ENCODE measurements at regions of chr1 and their contacts with region 1.

Region 1: DNA sequence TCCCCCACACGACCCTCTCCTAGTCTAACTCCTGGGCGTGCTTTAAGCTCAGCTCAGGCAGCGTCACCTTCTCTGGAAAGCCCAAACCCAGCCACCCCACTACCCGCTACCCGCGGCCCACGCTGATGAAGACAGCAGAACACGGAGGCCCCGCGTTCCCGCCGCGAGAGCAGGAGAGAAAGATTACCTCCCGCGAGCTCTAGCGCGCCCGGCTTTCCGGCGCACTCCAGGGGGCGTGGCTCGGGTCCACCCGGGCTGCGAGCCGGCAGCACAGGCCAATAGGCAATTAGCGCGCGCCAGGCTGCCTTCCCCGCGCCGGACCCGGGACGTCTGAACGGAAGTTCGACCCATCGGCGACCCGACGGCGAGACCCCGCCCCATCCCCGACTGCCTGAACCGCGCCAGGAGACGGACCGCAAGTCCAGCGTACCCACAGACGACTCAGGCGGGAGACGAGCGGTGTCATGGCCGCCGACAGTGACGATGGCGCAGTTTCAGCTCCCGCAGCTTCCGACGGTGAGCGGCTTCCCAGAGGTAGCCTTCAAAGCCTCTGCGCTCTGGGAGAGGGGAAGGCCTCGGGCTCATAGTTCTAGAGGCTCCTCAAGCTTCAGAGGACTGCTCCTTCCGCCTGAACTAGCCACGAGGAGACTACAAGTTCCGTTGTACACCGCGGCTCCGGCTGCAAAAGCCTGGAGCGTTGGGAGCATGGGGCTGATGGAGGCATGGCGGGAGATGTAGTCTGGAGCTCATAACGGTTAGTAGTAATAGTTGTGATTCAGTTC is at the starts of genes MUTYH and TOE1:
- DNase-seq: peak; percentile 83 to 94 (median 88)
- ATAC-seq: peak; percentile 79
- H3K4me3 ChIP-seq: peak within 1 kb of the TSS; percentile 98
- H3K4me3 Mint-ChIP-seq: peak within 1 kb of the TSS; percentile 100
- H3K27ac ChIP-seq: peak within 1 kb of the TSS; percentile 98 to 100
- H3K27ac Mint-ChIP-seq: peak within 1 kb of the TSS; percentile 95
- H3K4me1 ChIP-seq: peaks cover 42% of the 10 kb centered on the region
- H3K4me1 Mint-ChIP-seq: peaks cover 58% of the 10 kb centered on the region
- H3K27me3 ChIP-seq: no peaks in the 10 kb centered on the region
- H3K27me3 Mint-ChIP-seq: no peaks in the 10 kb centered on the region
- CTCF ChIP-seq: no peak
- total RNA-seq, gene MUTYH: 57.9 to 67.4 TPM
- total RNA-seq, gene TOE1: 44.5 to 46.2 TPM

Region 2: GRCh38 chr1:44631647-44632539 is 708.1 kb before region 1 on chr1:
- CTCF ChIA-PET with region 1: no interaction called
- POLR2A ChIA-PET with region 1: interaction called, 10 read pairs
- intact Hi-C with region 1: loop called in 1 of 2 experiments (anchors 5 kb)
- DNase-seq: peak; percentile 80 to 93 (median 86)
- ATAC-seq: peak; percentile 75
- H3K4me3 ChIP-seq: peak overlapping the region; percentile 71
- H3K4me3 Mint-ChIP-seq: peak overlapping the region; percentile 92
- H3K27ac ChIP-seq: peak overlapping the region; percentile 73 to 88
- H3K27ac Mint-ChIP-seq: peak overlapping the region; percentile 98
- H3K4me1 ChIP-seq: peaks cover 27% of the 10 kb centered on the region
- H3K4me1 Mint-ChIP-seq: peaks cover 48% of the 10 kb centered on the region
- H3K27me3 ChIP-seq: no peaks in the 10 kb centered on the region
- H3K27me3 Mint-ChIP-seq: no peaks in the 10 kb centered on the region
- CTCF ChIP-seq: no peak

Region 3: GRCh38 chr1:44775078-44775929 is 564.7 kb before region 1 on chr1 and contains the start of gene RPS8:
- CTCF ChIA-PET with region 1: no interaction called
- POLR2A ChIA-PET with region 1: interaction called, 19 read pairs
- intact Hi-C with region 1: loop called in 1 of 2 experiments (anchors 5 kb)
- DNase-seq: peak; percentile 82 to 95 (median 86)
- ATAC-seq: peak; percentile 83
- H3K4me3 ChIP-seq: peak within 1 kb of the TSS; percentile 77
- H3K4me3 Mint-ChIP-seq: peak within 1 kb of the TSS; percentile 90
- H3K27ac ChIP-seq: peak within 1 kb of the TSS; percentile 91
- H3K27ac Mint-ChIP-seq: peak within 1 kb of the TSS; percentile 89
- H3K4me1 ChIP-seq: peaks cover 33% of the 10 kb centered on the region
- H3K4me1 Mint-ChIP-seq: peaks cover 54% of the 10 kb centered on the region
- H3K27me3 ChIP-seq: no peaks in the 10 kb centered on the region
- H3K27me3 Mint-ChIP-seq: no peaks in the 10 kb centered on the region
- CTCF ChIP-seq: no peak
- total RNA-seq, gene RPS8: 3,394 to 3,436 TPM

Region 4: GRCh38 chr1:44812822-44813543 is 527.0 kb before region 1 on chr1:
- CTCF ChIA-PET with region 1: no interaction called
- POLR2A ChIA-PET with region 1: interaction called, 17 read pairs
- intact Hi-C with region 1: no loop called
- DNase-seq: peak in 2 of 14 experiments; percentile 16 to 50
- ATAC-seq: no peak
- H3K4me3 ChIP-seq: peak overlapping the region; percentile 57
- H3K4me3 Mint-ChIP-seq: peak overlapping the region; percentile 83
- H3K27ac ChIP-seq: peak overlapping the region; percentile 55 to 74
- H3K27ac Mint-ChIP-seq: peak overlapping the region; percentile 99
- H3K4me1 ChIP-seq: peaks cover 68% of the 10 kb centered on the region
- H3K4me1 Mint-ChIP-seq: peaks cover 70% of the 10 kb centered on the region
- H3K27me3 ChIP-seq: no peaks in the 10 kb centered on the region
- H3K27me3 Mint-ChIP-seq: peaks cover 4% of the 10 kb centered on the region
- CTCF ChIP-seq: no peak

Region 5: GRCh38 chr1:45205910-45206721 is 133.9 kb before region 1 on chr1 and contains the start of gene ZSWIM5:
- CTCF ChIA-PET with region 1: no interaction called
- POLR2A ChIA-PET with region 1: interaction called, 11 read pairs
- intact Hi-C with region 1: loop called in 1 of 2 experiments (anchors 5 kb)
- DNase-seq: peak; percentile 23 to 88 (median 62)
- ATAC-seq: peak; percentile 85
- H3K4me3 ChIP-seq: peak within 1 kb of the TSS; percentile 74
- H3K4me3 Mint-ChIP-seq: peak within 1 kb of the TSS; percentile 99
- H3K27ac ChIP-seq: peak within 1 kb of the TSS in 1 of 2 donors; percentile 32
- H3K27ac Mint-ChIP-seq: peak within 1 kb of the TSS; percentile 80
- H3K4me1 ChIP-seq: peaks cover 20% of the 10 kb centered on the region
- H3K4me1 Mint-ChIP-seq: peaks cover 30% of the 10 kb centered on the region
- H3K27me3 ChIP-seq: peaks cover 0 to 3% of the 10 kb centered on the region in 2 experiments
- H3K27me3 Mint-ChIP-seq: peaks cover 16% of the 10 kb centered on the region
- CTCF ChIP-seq: no peak
- total RNA-seq, gene ZSWIM5: 0.91 to 1.1 TPM

Region 6: GRCh38 chr1:45370575-45370974 is 30.6 kb after region 1 on chr1:
- CTCF ChIA-PET with region 1: no interaction called
- POLR2A ChIA-PET with region 1: no interaction called
- intact Hi-C with region 1: no loop called
- DNase-seq: no peak
- ATAC-seq: no peak
- H3K4me3 ChIP-seq: no peak overlapping the region
- H3K4me3 Mint-ChIP-seq: no peak overlapping the region
- H3K27ac ChIP-seq: no peak overlapping the region
- H3K27ac Mint-ChIP-seq: no peak overlapping the region
- H3K4me1 ChIP-seq: no peaks in the 10 kb centered on the region
- H3K4me1 Mint-ChIP-seq: no peaks in the 10 kb centered on the region
- H3K27me3 ChIP-seq: no peaks in the 10 kb centered on the region
- H3K27me3 Mint-ChIP-seq: no peaks in the 10 kb centered on the region
- CTCF ChIP-seq: no peak

Region 7: GRCh38 chr1:45499415-45499769 is 159.4 kb after region 1 on chr1:
- CTCF ChIA-PET with region 1: interaction called, 11 read pairs
- POLR2A ChIA-PET with region 1: interaction called, 76 read pairs
- intact Hi-C with region 1: loop called (anchors 2 to 5 kb)
- DNase-seq: peak in 1 of 14 experiments; percentile 23
- ATAC-seq: no peak
- H3K4me3 ChIP-seq: peak overlapping the region; percentile 80
- H3K4me3 Mint-ChIP-seq: peak overlapping the region; percentile 96
- H3K27ac ChIP-seq: peak overlapping the region; percentile 0 to 53
- H3K27ac Mint-ChIP-seq: peak overlapping the region; percentile 83
- H3K4me1 ChIP-seq: peaks cover 24% of the 10 kb centered on the region
- H3K4me1 Mint-ChIP-seq: peaks cover 36% of the 10 kb centered on the region
- H3K27me3 ChIP-seq: no peaks in the 10 kb centered on the region
- H3K27me3 Mint-ChIP-seq: no peaks in the 10 kb centered on the region
- CTCF ChIP-seq: no peak

Region 8: DNA sequence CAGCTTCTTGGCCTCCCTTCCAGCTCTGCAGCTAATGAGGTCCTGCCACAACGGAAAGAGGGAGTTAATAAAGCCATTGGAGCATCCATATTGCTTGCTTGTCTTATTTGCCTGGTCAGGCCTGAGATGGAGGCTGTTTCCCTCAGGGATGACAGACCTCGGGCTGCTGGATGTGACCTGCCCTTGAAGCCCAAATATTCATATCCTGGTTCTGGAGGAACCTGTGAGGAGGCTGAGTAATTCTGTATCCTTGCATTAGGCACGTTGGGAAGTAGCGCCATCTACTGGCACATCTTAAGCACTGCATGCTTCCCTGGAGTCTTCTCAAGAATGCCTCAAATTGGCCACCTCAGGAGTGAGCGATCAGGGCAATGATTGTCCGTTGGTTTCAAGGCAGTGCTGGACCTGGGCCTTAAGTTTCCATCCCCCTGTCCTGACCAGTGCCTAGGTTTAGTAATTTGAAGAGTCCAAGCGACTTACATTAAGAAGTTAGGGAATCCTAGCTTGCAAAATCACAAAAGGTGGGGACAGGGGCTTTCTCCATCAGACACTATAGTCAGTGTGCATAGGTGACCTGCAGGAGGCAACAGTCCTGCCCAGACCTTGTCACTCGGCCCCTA is 230.1 kb after region 1 on chr1:
- CTCF ChIA-PET with region 1: no interaction called
- POLR2A ChIA-PET with region 1: no interaction called
- intact Hi-C with region 1: no loop called
- DNase-seq: peak; percentile 55 to 87 (median 60)
- ATAC-seq: peak; percentile 99
- H3K4me3 ChIP-seq: no peak overlapping the region
- H3K4me3 Mint-ChIP-seq: no peak overlapping the region
- H3K27ac ChIP-seq: no peak overlapping the region
- H3K27ac Mint-ChIP-seq: no peak overlapping the region
- H3K4me1 ChIP-seq: peaks cover 2% of the 10 kb centered on the region
- H3K4me1 Mint-ChIP-seq: peaks cover 5% of the 10 kb centered on the region
- H3K27me3 ChIP-seq: no peaks in the 10 kb centered on the region
- H3K27me3 Mint-ChIP-seq: no peaks in the 10 kb centered on the region
- CTCF ChIP-seq: peak; percentile 95

Region 9: GRCh38 chr1:45583264-45583665 is 243.3 kb after region 1 on chr1:
- CTCF ChIA-PET with region 1: no interaction called
- POLR2A ChIA-PET with region 1: interaction called, 35 read pairs
- intact Hi-C with region 1: loop called (anchors 5 to 10 kb)
- DNase-seq: peak; percentile 88 to 98 (median 92)
- ATAC-seq: peak; percentile 74
- H3K4me3 ChIP-seq: peak overlapping the region; percentile 95
- H3K4me3 Mint-ChIP-seq: peak overlapping the region; percentile 94
- H3K27ac ChIP-seq: peak overlapping the region; percentile 94 to 95
- H3K27ac Mint-ChIP-seq: peak overlapping the region; percentile 93
- H3K4me1 ChIP-seq: peaks cover 36% of the 10 kb centered on the region
- H3K4me1 Mint-ChIP-seq: peaks cover 36% of the 10 kb centered on the region
- H3K27me3 ChIP-seq: no peaks in the 10 kb centered on the region
- H3K27me3 Mint-ChIP-seq: no peaks in the 10 kb centered on the region
- CTCF ChIP-seq: no peak

Region 10: GRCh38 chr1:45730475-45731339 is 390.7 kb after region 1 on chr1:
- CTCF ChIA-PET with region 1: no interaction called
- POLR2A ChIA-PET with region 1: no interaction called
- intact Hi-C with region 1: no loop called
- DNase-seq: no peak
- ATAC-seq: no peak
- H3K4me3 ChIP-seq: no peak overlapping the region
- H3K4me3 Mint-ChIP-seq: no peak overlapping the region
- H3K27ac ChIP-seq: no peak overlapping the region
- H3K27ac Mint-ChIP-seq: no peak overlapping the region
- H3K4me1 ChIP-seq: no peaks in the 10 kb centered on the region
- H3K4me1 Mint-ChIP-seq: peaks cover 18% of the 10 kb centered on the region
- H3K27me3 ChIP-seq: no peaks in the 10 kb centered on the region
- H3K27me3 Mint-ChIP-seq: no peaks in the 10 kb centered on the region
- CTCF ChIP-seq: no peak

Measured in CD4-positive, alpha-beta T cell (primary cell).